CD4-positive, alpha-beta memory T cell (primary cell): ENCODE measurements at regions of chr17 and their contacts with region 1.

Region 1: DNA sequence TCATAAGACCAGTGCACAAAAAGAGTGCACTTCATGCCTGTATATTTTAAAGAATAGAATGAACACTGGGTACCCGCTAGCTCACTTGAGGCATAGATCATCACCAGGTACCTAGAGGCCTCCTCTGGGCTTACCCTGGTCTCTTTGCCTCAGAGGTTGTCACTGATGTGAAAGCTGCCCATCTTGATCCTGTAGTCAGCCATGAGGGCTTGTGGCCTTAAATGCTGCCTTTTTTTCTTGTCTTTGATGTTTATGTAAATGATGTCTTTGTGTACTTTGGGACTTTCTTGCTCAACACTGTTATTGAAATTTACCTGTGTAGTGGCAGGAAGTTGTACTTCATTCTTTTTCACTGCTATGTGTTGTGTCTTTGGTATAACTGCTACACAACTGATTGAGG is 26.8 kb upstream of the SLC5A10 start:
- DNase-seq: peak in 1 of 5 donors; percentile 17
- H3K4me3 ChIP-seq: no peak overlapping the region
- H3K4me3 Mint-ChIP-seq: peak overlapping the region in 5 of 8 donors; percentile 8 to 53 (median 38)
- H3K27ac ChIP-seq: no peak overlapping the region
- H3K27ac Mint-ChIP-seq: peak overlapping the region in 4 of 7 donors; percentile 15 to 70 (median 42)
- H3K4me1 ChIP-seq: peaks cover 53% of the 10 kb centered on the region
- H3K4me1 Mint-ChIP-seq: peaks cover 24 to 44% (median 34%) of the 10 kb centered on the region in 4 donors
- H3K27me3 ChIP-seq: no peaks in the 10 kb centered on the region
- H3K27me3 Mint-ChIP-seq: no peaks in the 10 kb centered on the region

Region 2: GRCh38 chr17:18877104-18877503 is 48.1 kb before region 1 on chr17:
- CTCF ChIA-PET with region 1: no interaction called
- POLR2A ChIA-PET with region 1: no interaction called
- intact Hi-C with region 1: no loop called
- DNase-seq: no peak
- H3K4me3 ChIP-seq: no peak overlapping the region
- H3K4me3 Mint-ChIP-seq: no peak overlapping the region
- H3K27ac ChIP-seq: no peak overlapping the region
- H3K27ac Mint-ChIP-seq: peak overlapping the region in 1 of 7 donors; percentile 8
- H3K4me1 ChIP-seq: no peaks in the 10 kb centered on the region
- H3K4me1 Mint-ChIP-seq: peaks cover 0 to 4% (median 2%) of the 10 kb centered on the region in 4 donors
- H3K27me3 ChIP-seq: no peaks in the 10 kb centered on the region
- H3K27me3 Mint-ChIP-seq: no peaks in the 10 kb centered on the region

Region 3: DNA sequence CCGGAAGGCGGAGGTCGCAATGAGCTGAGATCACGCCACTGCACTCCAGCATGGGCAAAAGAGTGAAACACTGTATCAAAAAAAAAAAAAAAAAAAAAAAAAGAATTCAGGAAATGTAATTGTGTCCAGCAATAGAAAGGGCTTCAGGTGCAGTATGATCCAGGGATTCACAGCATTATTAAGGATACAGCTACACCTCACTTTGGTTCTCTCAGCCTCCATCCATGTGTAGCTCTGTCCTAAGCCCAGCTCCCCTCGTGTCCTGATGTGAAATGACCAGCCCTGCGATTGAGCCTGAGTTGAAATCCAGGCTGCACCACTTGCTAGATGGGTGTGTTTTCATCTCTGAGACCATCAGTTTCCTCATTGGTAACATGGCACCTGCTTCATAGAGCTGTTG is 29.8 kb after region 1 on chr17:
- CTCF ChIA-PET with region 1: interaction called, 5 read pairs
- POLR2A ChIA-PET with region 1: interaction called, 4 read pairs
- intact Hi-C with region 1: loop called (anchors 1 kb)
- DNase-seq: no peak
- H3K4me3 ChIP-seq: peak overlapping the region in 1 of 2 donors; percentile 43
- H3K4me3 Mint-ChIP-seq: peak overlapping the region; percentile 48 to 96 (median 84)
- H3K27ac ChIP-seq: no peak overlapping the region
- H3K27ac Mint-ChIP-seq: peak overlapping the region; percentile 74 to 96 (median 91)
- H3K4me1 ChIP-seq: peaks cover 35% of the 10 kb centered on the region
- H3K4me1 Mint-ChIP-seq: peaks cover 25 to 60% (median 35%) of the 10 kb centered on the region in 4 donors
- H3K27me3 ChIP-seq: no peaks in the 10 kb centered on the region
- H3K27me3 Mint-ChIP-seq: no peaks in the 10 kb centered on the region